ENCODE measurements at regions of chr2 and their contacts with region 1.

Region 1: DNA sequence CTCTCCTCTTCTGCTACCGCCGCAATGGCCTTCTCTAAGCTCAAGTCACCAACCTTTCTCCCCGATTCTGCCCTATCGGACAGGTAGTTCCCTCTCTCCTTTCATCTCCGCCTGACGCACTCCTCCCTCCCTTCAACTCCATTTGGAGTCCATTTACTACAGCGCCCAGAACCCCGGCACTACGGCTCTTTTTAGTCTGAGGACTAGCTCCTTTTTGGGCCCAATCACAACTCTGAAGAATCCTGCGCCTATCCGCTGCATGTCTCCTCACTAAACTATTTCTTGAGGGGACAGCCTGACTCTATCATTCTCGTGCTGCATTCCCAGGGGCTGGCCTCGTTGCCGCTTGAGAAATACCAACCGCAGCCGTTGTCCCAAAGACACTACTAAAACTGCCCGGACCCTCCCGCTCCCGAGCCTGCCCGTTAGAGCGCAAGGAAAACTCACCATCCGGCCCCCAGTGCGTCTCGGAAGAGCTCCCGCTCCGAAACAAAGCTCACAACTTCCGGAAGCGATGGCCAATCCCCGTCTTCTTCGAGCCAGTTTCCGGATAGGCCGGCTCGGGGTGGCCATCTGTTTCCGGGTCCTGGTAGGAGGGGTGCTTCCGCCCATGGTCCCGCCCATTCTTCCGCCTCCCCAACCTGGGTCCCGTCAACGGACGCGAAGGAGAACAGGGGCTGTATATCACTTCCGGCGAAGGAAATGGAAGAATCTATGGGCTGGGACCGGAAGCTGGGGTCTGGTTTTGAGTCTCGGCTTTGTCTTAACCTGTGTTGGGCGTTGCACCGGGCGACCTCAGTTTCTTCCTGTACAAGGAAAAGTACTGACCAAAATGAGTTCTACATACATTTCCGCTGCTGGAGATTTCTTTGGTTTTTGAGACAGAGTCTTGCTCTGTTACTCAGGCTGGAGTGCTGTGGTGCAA is at the start of gene TPRKB:
- DNase-seq: peak; percentile 98
- H3K4me3 Mint-ChIP-seq: peak within 1 kb of the TSS; percentile 86
- H3K27ac Mint-ChIP-seq: peak within 1 kb of the TSS; percentile 92
- H3K4me1 Mint-ChIP-seq: peaks cover 11% of the 10 kb centered on the region
- H3K27me3 Mint-ChIP-seq: no peaks in the 10 kb centered on the region
- CTCF ChIP-seq: no peak
- total RNA-seq, gene TPRKB: 40.4 and 51.0 TPM in 2 replicates

Region 2: DNA sequence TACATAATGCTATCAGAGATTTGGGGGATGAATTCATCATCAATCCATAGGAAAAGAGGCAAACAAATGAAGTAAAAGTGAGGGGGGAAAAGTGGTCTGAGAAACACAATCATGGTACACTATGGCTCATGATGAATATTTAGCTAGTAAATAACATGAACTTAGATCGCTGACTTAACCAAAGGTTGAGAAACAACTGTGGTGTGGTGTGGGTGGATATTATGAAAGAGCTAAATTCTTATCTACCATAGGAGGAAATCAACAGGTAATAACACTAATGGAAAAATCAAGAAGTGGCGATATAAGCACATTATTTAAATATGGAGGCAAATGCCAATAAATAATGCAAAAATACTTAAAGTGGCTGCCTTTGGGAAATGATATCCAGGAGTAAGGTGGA is 12.2 kb after region 1 on chr2:
- CTCF ChIA-PET with region 1: interaction called, 3 read pairs
- POLR2A ChIA-PET with region 1: interaction called, 17 read pairs
- intact Hi-C with region 1: no loop called
- DNase-seq: no peak
- H3K4me3 Mint-ChIP-seq: no peak overlapping the region
- H3K27ac Mint-ChIP-seq: no peak overlapping the region
- H3K4me1 Mint-ChIP-seq: peaks cover 7% of the 10 kb centered on the region
- H3K27me3 Mint-ChIP-seq: no peaks in the 10 kb centered on the region
- CTCF ChIP-seq: no peak

Region 3: DNA sequence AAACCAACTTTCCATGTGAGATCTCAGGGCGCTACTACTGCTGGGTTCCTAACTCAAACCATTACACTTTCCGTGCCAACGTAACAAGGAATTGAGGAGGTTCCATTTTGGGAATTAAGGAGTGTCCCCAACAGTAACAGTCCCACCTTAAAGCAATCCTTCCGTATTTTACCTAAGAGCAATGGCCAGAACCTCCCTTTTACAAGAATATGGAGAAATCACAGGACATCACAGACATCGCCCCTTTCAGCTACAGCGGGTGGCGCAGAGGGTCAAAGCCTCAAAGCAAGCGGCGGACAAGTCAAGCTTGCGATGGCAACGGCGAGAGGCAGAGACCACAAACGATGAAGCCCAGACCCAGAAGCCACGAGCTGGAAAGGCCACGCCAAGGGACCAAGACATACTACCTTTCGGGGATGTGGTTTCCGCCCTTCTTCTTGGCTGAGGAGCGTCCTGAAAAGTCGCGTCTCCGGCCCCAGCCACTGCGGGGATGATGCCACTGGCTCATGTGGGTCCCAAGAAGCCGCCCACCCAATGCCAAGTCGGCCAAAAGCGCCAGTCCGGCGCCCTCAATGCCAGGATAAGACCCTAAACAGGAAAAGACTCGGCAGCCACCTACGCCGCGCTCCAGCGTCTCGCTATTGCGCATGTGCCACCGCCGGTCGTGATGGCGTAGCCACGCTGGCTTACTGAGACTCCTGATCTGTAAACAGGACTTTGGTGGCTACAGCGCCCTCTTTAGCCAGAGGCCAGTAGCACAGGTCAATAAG is 42.5 kb after region 1 on chr2 and contains the start of gene DUSP11:
- CTCF ChIA-PET with region 1: no interaction called
- POLR2A ChIA-PET with region 1: interaction called, 14 read pairs
- intact Hi-C with region 1: no loop called
- DNase-seq: peak; percentile 95
- H3K4me3 Mint-ChIP-seq: peak within 1 kb of the TSS; percentile 94
- H3K27ac Mint-ChIP-seq: peak within 1 kb of the TSS; percentile 96
- H3K4me1 Mint-ChIP-seq: peaks cover 25% of the 10 kb centered on the region
- H3K27me3 Mint-ChIP-seq: no peaks in the 10 kb centered on the region
- CTCF ChIP-seq: peak; percentile 85
- total RNA-seq, gene DUSP11: 45.0 and 46.3 TPM in 2 replicates